ENCODE measurements at regions of chr20 and their contacts with region 1.

Region 1: DNA sequence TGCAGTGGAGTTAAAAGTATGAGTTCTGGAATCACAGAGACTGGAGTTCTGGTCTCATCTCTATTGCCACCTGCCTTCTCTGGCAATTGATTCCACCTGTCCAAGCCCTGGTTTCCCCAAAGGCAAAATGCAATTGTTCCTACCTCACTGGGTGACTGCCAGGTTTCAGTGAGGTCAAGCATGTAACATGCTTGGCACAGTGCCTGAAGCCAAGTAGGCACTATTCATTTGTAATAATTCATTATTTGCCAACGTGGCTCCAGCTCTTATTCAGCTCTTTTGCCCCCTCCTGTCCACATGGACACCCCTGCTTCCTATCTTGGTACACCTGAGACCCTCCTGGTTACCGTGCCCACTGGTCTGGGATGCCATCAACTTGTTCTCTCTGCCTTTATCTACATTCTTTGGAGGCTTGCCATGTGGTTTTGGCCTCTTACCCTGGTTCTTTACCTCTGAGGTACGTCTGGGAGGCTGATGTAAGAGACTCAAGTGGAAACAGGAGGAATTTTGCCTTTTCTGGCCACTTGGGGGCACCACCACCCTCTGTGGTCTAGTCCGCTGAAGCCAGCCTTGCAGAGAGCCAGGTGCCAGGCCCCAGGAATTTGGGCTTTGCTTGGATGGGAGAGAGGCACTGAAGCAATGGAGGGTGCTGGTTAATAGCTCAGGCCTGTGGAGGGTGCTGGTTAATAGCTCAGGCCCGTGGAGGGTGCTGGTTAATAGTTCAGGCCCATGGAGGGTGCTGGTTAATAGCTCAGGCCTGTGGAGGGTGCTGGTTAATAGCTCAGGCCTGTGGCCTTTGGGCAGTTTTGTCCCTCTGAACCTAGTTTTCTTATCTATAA is 1.7 kb downstream of the KCNK15 start:
- DNase-seq: peak; percentile 75
- H3K4me3 Mint-ChIP-seq: no peak overlapping the region
- H3K27ac Mint-ChIP-seq: no peak overlapping the region
- H3K4me1 Mint-ChIP-seq: peaks cover 9% of the 10 kb centered on the region
- H3K27me3 Mint-ChIP-seq: peaks cover 72% of the 10 kb centered on the region

Region 2: DNA sequence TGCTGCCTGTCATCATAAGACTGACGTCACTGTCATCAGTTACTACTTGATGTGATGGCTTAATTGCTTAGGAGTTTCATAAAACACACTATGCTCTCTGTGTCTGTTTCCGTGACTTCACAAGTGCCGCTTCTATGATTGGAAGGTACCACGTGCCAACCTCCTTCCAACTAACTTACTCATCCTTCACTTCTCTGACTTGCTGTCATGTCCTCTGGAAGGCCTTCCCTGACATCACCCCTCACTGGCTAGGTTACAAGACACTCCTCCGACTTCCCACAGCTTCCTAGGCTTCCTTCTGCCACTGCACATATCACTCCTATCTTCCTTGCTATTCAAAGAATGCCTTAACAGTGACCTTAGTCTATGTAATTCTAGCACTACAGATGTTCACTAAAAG is 245.9 kb before region 1 on chr20:
- CTCF ChIA-PET with region 1: no interaction called
- DNase-seq: no peak
- H3K4me3 Mint-ChIP-seq: no peak overlapping the region
- H3K27ac Mint-ChIP-seq: no peak overlapping the region
- H3K4me1 Mint-ChIP-seq: no peaks in the 10 kb centered on the region
- H3K27me3 Mint-ChIP-seq: no peaks in the 10 kb centered on the region

Region 3: GRCh38 chr20:44714696-44715482 is 32.5 kb before region 1 on chr20 and contains the start of gene CCN5:
- CTCF ChIA-PET with region 1: no interaction called
- DNase-seq: no peak
- H3K4me3 Mint-ChIP-seq: no peak within 1 kb of the TSS
- H3K27ac Mint-ChIP-seq: no peak within 1 kb of the TSS
- H3K4me1 Mint-ChIP-seq: no peaks in the 10 kb centered on the region
- H3K27me3 Mint-ChIP-seq: peaks cover 18% of the 10 kb centered on the region

Region 4: GRCh38 chr20:44861531-44862006 is 114.2 kb after region 1 on chr20:
- CTCF ChIA-PET with region 1: interaction called, 21 read pairs
- DNase-seq: no peak
- H3K4me3 Mint-ChIP-seq: no peak overlapping the region
- H3K27ac Mint-ChIP-seq: no peak overlapping the region
- H3K4me1 Mint-ChIP-seq: peaks cover 13% of the 10 kb centered on the region
- H3K27me3 Mint-ChIP-seq: peaks cover 17% of the 10 kb centered on the region

Region 5: DNA sequence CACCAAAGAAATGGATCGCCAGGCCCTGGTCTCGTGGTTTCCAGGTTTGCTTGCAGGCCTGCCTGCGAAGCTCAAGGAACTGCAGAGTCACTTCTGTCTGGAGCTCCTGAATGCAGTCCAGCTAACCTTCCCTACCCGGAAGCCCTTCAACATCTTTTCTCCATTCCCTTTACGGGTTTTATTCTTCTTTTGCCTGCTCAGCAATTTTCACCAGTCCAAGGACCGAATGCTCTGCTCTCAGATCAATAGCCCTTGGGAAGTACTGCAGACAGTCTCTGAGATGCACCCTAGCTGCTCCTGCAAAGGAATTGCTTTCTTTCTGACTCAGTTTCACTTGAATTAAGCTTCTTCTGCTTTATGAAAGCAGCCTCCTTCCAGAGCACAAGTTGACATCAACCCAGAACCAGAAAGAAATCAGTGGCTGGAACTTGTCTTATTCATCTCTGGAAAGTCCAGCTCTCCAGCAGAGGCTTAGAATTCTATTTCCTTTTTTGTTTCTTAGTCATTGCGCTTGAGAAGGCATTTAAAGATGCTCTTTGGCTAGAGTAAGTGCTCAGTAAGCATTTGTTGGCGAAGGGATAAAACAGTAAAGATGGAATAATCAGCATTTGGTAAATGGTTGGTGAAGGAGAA is 119.4 kb after region 1 on chr20:
- CTCF ChIA-PET with region 1: interaction called, 21 read pairs
- DNase-seq: no peak
- H3K4me3 Mint-ChIP-seq: no peak overlapping the region
- H3K27ac Mint-ChIP-seq: no peak overlapping the region
- H3K4me1 Mint-ChIP-seq: peaks cover 7% of the 10 kb centered on the region
- H3K27me3 Mint-ChIP-seq: peaks cover 49% of the 10 kb centered on the region

Region 6: DNA sequence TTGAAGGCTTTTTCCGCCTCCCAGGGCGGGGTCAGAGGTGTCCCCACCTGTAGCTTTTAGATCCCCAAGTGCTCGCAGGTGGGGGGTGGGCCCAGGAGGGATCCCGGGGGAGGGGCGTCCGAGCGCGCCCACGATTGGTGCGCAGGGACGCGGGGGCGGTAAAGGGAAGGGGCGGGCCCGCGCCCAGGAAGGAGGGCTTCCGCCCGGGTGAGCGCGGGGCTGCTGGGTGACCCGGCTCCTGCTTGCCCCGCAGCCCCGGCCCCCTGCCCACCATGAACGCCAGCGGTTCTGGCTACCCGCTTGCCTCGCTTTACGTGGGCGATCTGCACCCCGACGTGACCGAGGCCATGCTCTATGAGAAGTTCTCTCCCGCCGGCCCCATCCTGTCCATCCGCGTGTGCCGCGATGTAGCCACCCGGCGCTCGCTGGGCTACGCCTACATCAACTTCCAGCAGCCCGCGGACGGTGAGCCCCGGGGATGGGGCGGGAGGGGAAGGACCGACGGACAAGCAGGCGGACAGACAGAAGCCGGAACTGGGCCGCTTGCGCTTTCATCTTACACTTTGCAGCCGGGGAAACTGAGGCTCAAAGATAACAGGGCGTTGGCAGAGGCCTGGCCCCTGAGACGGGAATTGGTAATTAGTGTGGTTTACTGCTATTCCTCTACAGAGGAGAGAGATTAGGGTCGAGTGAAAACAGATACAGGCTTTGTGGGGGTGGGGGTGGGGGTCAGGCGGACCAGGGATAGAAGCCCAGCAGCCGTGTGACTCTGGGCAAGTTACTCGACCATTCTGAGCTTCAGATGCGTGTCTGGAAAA is 162.7 kb after region 1 on chr20 and contains the start of gene PABPC1L:
- CTCF ChIA-PET with region 1: no interaction called
- DNase-seq: peak; percentile 83
- H3K4me3 Mint-ChIP-seq: peak within 1 kb of the TSS; percentile 88
- H3K27ac Mint-ChIP-seq: peak within 1 kb of the TSS; percentile 77
- H3K4me1 Mint-ChIP-seq: peaks cover 45% of the 10 kb centered on the region
- H3K27me3 Mint-ChIP-seq: no peaks in the 10 kb centered on the region

Measured in activated naive CD4-positive, alpha-beta T cell treated with anti-CD3 and anti-CD28 coated beads, Interleukin-2, amount 10 ng/mL, durations not matched to agents 7 days and 5 days (primary cell).